B cell (primary cell): ENCODE measurements at regions of chr10 and their contacts with region 1.

Region 1: GRCh38 chr10:93376372-93377293 is 105.5 kb downstream of the MYOF start:
- DNase-seq: peak; percentile 79
- ATAC-seq: peak; percentile 57
- H3K4me3 ChIP-seq: no peak overlapping the region
- H3K4me3 Mint-ChIP-seq: no peak overlapping the region
- H3K27ac ChIP-seq: no peak overlapping the region
- H3K27ac Mint-ChIP-seq: no peak overlapping the region
- H3K4me1 ChIP-seq: peaks cover 0 to 3% of the 10 kb centered on the region in 2 donors
- H3K4me1 Mint-ChIP-seq: peaks cover 2% of the 10 kb centered on the region
- H3K27me3 ChIP-seq: peaks cover 0 to 2% (median 0%) of the 10 kb centered on the region in 4 experiments
- H3K27me3 Mint-ChIP-seq: peaks cover 10% of the 10 kb centered on the region
- CTCF ChIP-seq: peak; percentile 98

Region 2: GRCh38 chr10:93352638-93353383 is 23.8 kb before region 1 on chr10:
- CTCF ChIA-PET with region 1: interaction called, 33 read pairs
- POLR2A ChIA-PET with region 1: no interaction called
- intact Hi-C with region 1: no loop called
- DNase-seq: peak; percentile 57
- ATAC-seq: no peak
- H3K4me3 ChIP-seq: no peak overlapping the region
- H3K4me3 Mint-ChIP-seq: no peak overlapping the region
- H3K27ac ChIP-seq: no peak overlapping the region
- H3K27ac Mint-ChIP-seq: no peak overlapping the region
- H3K4me1 ChIP-seq: no peaks in the 10 kb centered on the region
- H3K4me1 Mint-ChIP-seq: no peaks in the 10 kb centered on the region
- H3K27me3 ChIP-seq: peaks cover 0 to 4% (median 0%) of the 10 kb centered on the region in 4 experiments
- H3K27me3 Mint-ChIP-seq: peaks cover 17% of the 10 kb centered on the region
- CTCF ChIP-seq: peak; percentile 84

Region 3: GRCh38 chr10:93386631-93387369 is 10.2 kb after region 1 on chr10:
- CTCF ChIA-PET with region 1: interaction called, 30 read pairs
- POLR2A ChIA-PET with region 1: no interaction called
- intact Hi-C with region 1: no loop called
- DNase-seq: peak; percentile 7
- ATAC-seq: no peak
- H3K4me3 ChIP-seq: no peak overlapping the region
- H3K4me3 Mint-ChIP-seq: no peak overlapping the region
- H3K27ac ChIP-seq: no peak overlapping the region
- H3K27ac Mint-ChIP-seq: no peak overlapping the region
- H3K4me1 ChIP-seq: peaks cover 14 to 25% of the 10 kb centered on the region in 2 donors
- H3K4me1 Mint-ChIP-seq: peaks cover 21% of the 10 kb centered on the region
- H3K27me3 ChIP-seq: no peaks in the 10 kb centered on the region
- H3K27me3 Mint-ChIP-seq: peaks cover 3% of the 10 kb centered on the region
- CTCF ChIP-seq: no peak

Region 4: GRCh38 chr10:93496322-93497041 is 119.8 kb after region 1 on chr10 and contains the start of gene CEP55:
- CTCF ChIA-PET with region 1: interaction called, 50 read pairs
- POLR2A ChIA-PET with region 1: no interaction called
- intact Hi-C with region 1: loop called (anchors 5 kb)
- DNase-seq: peak; percentile 94
- ATAC-seq: peak; percentile 99
- H3K4me3 ChIP-seq: peak within 1 kb of the TSS; percentile 67 to 97 (median 81)
- H3K4me3 Mint-ChIP-seq: peak within 1 kb of the TSS; percentile 93
- H3K27ac ChIP-seq: peak within 1 kb of the TSS in 1 of 2 donors; percentile 44
- H3K27ac Mint-ChIP-seq: peak within 1 kb of the TSS; percentile 67
- H3K4me1 ChIP-seq: peaks cover 8 to 16% of the 10 kb centered on the region in 2 donors
- H3K4me1 Mint-ChIP-seq: peaks cover 15% of the 10 kb centered on the region
- H3K27me3 ChIP-seq: peaks cover 0 to 4% (median 1%) of the 10 kb centered on the region in 4 experiments
- H3K27me3 Mint-ChIP-seq: peaks cover 8% of the 10 kb centered on the region
- CTCF ChIP-seq: no peak
- total RNA-seq, gene CEP55: 0.19 and 0.27 TPM in 2 replicates

Region 5: GRCh38 chr10:93515071-93516005 is 138.7 kb after region 1 on chr10:
- CTCF ChIA-PET with region 1: interaction called, 198 read pairs
- POLR2A ChIA-PET with region 1: no interaction called
- intact Hi-C with region 1: loop called (anchors 1 kb)
- DNase-seq: no peak
- ATAC-seq: no peak
- H3K4me3 ChIP-seq: no peak overlapping the region
- H3K4me3 Mint-ChIP-seq: no peak overlapping the region
- H3K27ac ChIP-seq: no peak overlapping the region
- H3K27ac Mint-ChIP-seq: no peak overlapping the region
- H3K4me1 ChIP-seq: peaks cover 0 to 3% of the 10 kb centered on the region in 2 donors
- H3K4me1 Mint-ChIP-seq: peaks cover 9% of the 10 kb centered on the region
- H3K27me3 ChIP-seq: no peaks in the 10 kb centered on the region
- H3K27me3 Mint-ChIP-seq: no peaks in the 10 kb centered on the region
- CTCF ChIP-seq: no peak